CD8-positive, alpha-beta memory T cell (primary cell): ENCODE measurements at regions of chr2 and their contacts with region 1.

Region 1: DNA sequence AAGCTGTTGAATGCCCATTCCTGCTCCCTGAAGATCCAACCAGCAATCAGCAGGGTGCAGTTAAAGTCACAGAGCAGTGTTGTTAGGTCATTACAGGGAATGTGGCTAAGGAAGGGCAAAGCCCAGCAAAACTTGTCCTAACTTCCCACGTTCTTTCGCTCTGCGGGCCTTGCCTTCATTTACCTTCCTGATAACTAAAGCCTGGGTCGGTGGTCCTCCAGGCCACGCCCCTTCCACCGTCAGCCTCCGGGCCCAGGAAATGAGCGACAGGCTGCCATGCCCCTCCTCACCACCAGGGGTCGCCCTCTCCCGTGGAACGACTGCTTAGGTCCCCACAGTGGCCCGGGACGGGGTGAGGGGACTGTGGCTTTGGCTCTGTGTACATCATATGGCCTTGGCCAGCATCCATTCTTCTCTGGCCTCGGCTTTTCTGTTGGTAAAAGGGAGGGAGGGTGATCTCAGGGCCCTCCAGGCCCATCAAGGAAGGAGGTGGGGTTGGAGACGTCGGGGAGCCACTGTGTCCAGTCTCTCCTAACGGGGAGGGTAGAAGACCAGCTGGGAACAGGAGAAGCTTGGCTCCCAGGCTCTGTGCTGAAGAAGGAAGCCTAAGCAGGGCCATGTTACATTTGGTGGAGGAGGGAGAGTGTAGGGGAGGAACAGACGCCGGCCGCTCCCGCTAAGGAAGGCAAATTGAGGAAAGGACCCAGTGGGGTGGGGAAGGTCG is 2.2 kb downstream of the SH2D6 start:
- DNase-seq: peak; percentile 80 to 90 (median 83)
- H3K4me3 ChIP-seq: peak overlapping the region; percentile 29
- H3K4me3 Mint-ChIP-seq: peak overlapping the region; percentile 57 to 90 (median 74)
- H3K27ac ChIP-seq: peak overlapping the region; percentile 45
- H3K27ac Mint-ChIP-seq: peak overlapping the region in 7 of 8 donors; percentile 18 to 97 (median 61)
- H3K4me1 ChIP-seq: peaks cover 27% of the 10 kb centered on the region
- H3K4me1 Mint-ChIP-seq: peaks cover 12 to 25% (median 16%) of the 10 kb centered on the region in 3 donors
- H3K27me3 ChIP-seq: no peaks in the 10 kb centered on the region
- H3K27me3 Mint-ChIP-seq: peaks cover 0 to 1% of the 10 kb centered on the region in 2 donors

Region 2: GRCh38 chr2:85545780-85546240 is 125.1 kb after region 1 on chr2:
- CTCF ChIA-PET with region 1: interaction called, 327 read pairs
- POLR2A ChIA-PET with region 1: interaction called, 24 read pairs
- DNase-seq: no peak
- H3K4me3 ChIP-seq: no peak overlapping the region
- H3K4me3 Mint-ChIP-seq: no peak overlapping the region
- H3K27ac ChIP-seq: no peak overlapping the region
- H3K27ac Mint-ChIP-seq: peak overlapping the region in 2 of 8 donors; percentile 31 to 43
- H3K4me1 ChIP-seq: peaks cover 5% of the 10 kb centered on the region
- H3K4me1 Mint-ChIP-seq: peaks cover 14 to 27% (median 26%) of the 10 kb centered on the region in 3 donors
- H3K27me3 ChIP-seq: no peaks in the 10 kb centered on the region
- H3K27me3 Mint-ChIP-seq: no peaks in the 10 kb centered on the region

Region 3: DNA sequence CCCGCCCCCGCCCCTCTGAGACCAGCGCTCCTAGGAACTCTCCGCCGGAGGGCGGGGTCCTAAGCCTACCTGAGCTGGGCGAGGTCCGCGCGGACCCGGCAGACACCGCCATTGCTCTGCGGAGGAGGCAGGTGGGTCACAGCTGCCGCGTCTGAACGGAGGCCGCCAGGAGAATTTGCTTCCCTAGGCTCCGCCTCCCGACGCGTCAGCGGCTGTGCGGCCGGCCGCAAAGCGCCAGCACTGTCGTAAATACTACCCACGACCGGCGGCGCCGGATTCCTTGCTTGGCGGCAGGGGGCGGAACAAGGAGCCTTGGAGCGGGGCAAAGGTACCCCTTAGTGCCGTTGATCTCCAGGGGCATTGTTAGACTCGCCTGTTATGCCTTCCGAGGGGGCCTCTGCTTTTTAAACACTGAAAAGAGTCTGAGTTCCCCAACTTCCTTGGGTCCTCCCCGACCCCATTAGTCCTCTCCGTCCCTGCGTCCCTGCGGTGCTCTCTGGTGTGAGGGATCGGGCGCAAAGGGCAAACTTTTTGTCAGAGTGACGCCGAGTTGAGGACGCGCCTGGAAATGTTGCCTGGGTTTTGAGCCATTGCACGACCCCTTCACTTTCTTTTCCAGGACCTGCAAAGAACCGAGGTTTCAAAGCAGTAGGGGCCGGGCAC is 140.8 kb after region 1 on chr2 and contains the start of gene GGCX:
- CTCF ChIA-PET with region 1: interaction called, 327 read pairs
- POLR2A ChIA-PET with region 1: interaction called, 3 read pairs
- DNase-seq: peak; percentile 86 to 95 (median 91)
- H3K4me3 ChIP-seq: peak within 1 kb of the TSS; percentile 87
- H3K4me3 Mint-ChIP-seq: peak within 1 kb of the TSS; percentile 95 to 98 (median 97)
- H3K27ac ChIP-seq: peak within 1 kb of the TSS; percentile 88
- H3K27ac Mint-ChIP-seq: peak within 1 kb of the TSS; percentile 90 to 98 (median 96)
- H3K4me1 ChIP-seq: peaks cover 12% of the 10 kb centered on the region
- H3K4me1 Mint-ChIP-seq: peaks cover 27 to 31% (median 30%) of the 10 kb centered on the region in 3 donors
- H3K27me3 ChIP-seq: no peaks in the 10 kb centered on the region
- H3K27me3 Mint-ChIP-seq: no peaks in the 10 kb centered on the region
- total RNA-seq, gene GGCX: 22.3 to 23.3 TPM